ENCODE measurements at regions of chr5 and their contacts with region 1.

Region 1: GRCh38 chr5:87347272-87347671 is 65.5 kb downstream of the CCNH start:
- DNase-seq: no peak
- H3K4me3 Mint-ChIP-seq: no peak overlapping the region
- H3K27ac Mint-ChIP-seq: no peak overlapping the region
- H3K4me1 Mint-ChIP-seq: peaks cover 8% of the 10 kb centered on the region
- H3K27me3 Mint-ChIP-seq: no peaks in the 10 kb centered on the region

Region 2: DNA sequence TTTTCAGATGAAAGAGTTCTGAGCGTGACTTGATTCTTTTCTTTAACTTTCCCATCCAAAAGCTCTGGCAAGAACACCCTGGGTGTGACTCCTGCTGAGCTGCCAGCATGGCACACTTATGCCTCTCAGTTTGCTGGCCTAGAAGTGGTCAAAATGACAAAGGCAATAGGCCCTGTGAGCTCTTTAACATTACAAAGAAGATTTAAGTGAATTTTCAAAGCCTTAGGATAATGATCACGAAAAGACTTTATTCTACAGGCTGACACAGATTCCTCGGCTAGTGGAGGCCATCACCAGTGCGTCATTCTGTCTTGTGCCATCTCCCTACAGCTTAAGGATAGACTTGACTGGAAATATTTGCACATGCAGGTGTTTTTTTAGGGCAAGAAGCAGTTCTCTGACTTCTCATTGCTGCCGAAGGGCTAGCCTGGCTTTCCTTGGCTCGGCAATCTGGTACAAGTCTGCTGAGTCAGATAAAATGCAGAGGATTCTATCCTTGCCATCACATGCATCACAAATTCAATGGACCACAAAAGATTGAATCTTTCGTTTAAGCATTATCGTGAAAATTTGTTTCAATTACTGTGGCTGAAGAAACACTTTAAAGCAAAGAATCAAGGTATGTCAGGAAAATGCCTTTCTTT is 418.0 kb before region 1 on chr5:
- intact Hi-C with region 1: no loop called
- DNase-seq: no peak
- H3K4me3 Mint-ChIP-seq: no peak overlapping the region
- H3K27ac Mint-ChIP-seq: no peak overlapping the region
- H3K4me1 Mint-ChIP-seq: no peaks in the 10 kb centered on the region
- H3K27me3 Mint-ChIP-seq: peaks cover 39% of the 10 kb centered on the region

Region 3: GRCh38 chr5:87322377-87322776 is 24.9 kb before region 1 on chr5:
- intact Hi-C with region 1: no loop called
- DNase-seq: no peak
- H3K4me3 Mint-ChIP-seq: no peak overlapping the region
- H3K27ac Mint-ChIP-seq: no peak overlapping the region
- H3K4me1 Mint-ChIP-seq: peaks cover 26% of the 10 kb centered on the region
- H3K27me3 Mint-ChIP-seq: no peaks in the 10 kb centered on the region

Region 4: GRCh38 chr5:87393331-87393730 is 46.1 kb after region 1 on chr5:
- intact Hi-C with region 1: loop called (anchors 5 kb)
- DNase-seq: no peak
- H3K4me3 Mint-ChIP-seq: no peak overlapping the region
- H3K27ac Mint-ChIP-seq: no peak overlapping the region
- H3K4me1 Mint-ChIP-seq: peaks cover 15% of the 10 kb centered on the region
- H3K27me3 Mint-ChIP-seq: no peaks in the 10 kb centered on the region